Activated naive CD4-positive, alpha-beta T cell treated with anti-CD3 and anti-CD28 coated beads, Interleukin-2, amount 10 ng/mL, durations not matched to agents 7 days and 5 days (primary cell): ENCODE measurements at regions of chr20 and their contacts with region 1.

Region 1: DNA sequence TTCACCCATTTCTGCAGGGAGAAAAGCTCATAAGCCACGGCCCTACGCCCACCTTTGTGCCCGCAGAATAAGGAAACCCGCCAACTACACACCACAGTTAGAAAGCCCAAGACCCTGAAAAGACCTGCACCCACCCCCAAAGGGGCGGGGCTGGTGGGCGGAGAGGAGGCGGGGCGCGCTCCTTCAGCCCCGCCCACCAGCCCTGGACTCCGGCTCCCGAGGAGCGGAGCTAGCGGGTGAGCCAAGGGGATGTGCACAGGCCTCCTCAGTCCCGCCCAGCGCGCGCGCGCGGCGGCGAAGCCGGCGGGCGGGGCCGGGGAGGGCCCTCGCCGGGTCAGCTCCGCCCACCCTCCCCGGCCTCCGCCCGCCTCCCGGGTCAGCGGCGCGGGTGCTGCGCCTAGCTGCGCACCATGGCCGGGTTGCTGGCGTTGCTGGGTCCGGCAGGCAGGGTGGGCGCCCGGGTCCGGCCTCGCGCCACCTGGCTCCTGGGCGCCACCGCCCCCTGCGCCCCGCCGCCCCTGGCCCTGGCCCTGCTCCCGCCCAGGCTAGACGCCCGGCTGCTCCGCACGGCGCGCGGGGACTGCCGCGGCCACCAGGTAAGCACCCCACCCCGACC is at the start of gene FAM210B:
- DNase-seq: peak; percentile 85
- H3K4me3 Mint-ChIP-seq: peak within 1 kb of the TSS; percentile 86
- H3K27ac Mint-ChIP-seq: peak within 1 kb of the TSS; percentile 45
- H3K4me1 Mint-ChIP-seq: peaks cover 15% of the 10 kb centered on the region
- H3K27me3 Mint-ChIP-seq: peaks cover 21% of the 10 kb centered on the region

Region 2: DNA sequence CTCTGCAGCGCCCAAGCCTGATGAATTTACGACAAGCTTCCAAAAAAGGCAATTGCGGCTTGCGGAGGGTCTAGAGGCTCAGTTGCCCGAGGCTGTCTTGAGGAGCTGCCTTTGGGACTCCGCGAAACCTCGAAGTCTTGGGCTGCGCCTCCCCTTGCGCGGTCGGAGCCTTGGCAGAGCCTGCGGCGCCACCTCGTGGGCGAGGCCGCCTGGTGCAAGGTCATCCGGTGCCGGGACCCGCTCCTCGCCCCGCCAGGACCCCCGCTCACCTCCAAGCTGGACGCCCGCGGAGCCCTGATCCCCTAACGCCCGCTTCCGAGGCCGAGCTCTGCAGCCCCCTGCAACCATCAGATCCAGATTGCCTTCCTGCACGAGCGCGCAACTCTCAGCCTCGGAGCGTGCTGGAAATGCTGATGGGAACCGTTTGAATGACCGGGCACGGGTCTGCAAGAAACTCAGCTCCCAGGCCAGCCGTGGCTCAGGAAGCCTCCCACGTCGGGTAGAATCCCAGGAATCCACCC is 14.8 kb before region 1 on chr20:
- CTCF ChIA-PET with region 1: interaction called, 13 read pairs
- DNase-seq: peak; percentile 54
- H3K4me3 Mint-ChIP-seq: no peak overlapping the region
- H3K27ac Mint-ChIP-seq: no peak overlapping the region
- H3K4me1 Mint-ChIP-seq: peaks cover 4% of the 10 kb centered on the region
- H3K27me3 Mint-ChIP-seq: peaks cover 52% of the 10 kb centered on the region

Region 3: DNA sequence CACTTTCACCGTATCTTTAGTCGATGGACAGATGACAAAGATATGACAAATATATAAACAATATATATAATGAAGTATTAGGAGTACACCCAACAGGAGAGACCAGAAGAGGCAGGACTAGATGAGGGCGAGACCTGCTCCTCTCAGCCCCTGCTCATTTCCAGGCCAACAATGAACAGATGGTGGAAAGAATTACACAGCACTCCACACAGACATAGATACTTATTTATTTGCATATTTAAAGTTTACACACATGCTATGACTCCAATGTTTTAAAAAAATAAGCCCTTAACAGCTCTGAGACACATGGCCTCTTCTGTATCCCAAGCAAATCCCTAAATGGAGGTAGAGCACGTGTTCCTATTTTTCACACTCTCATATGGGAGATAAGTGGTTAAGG is 10.5 kb after region 1 on chr20:
- CTCF ChIA-PET with region 1: no interaction called
- DNase-seq: no peak
- H3K4me3 Mint-ChIP-seq: no peak overlapping the region
- H3K27ac Mint-ChIP-seq: no peak overlapping the region
- H3K4me1 Mint-ChIP-seq: peaks cover 5% of the 10 kb centered on the region
- H3K27me3 Mint-ChIP-seq: no peaks in the 10 kb centered on the region